AG04449 (cell line): ENCODE measurements at regions of chr3 and their contacts with region 1.

Region 1: DNA sequence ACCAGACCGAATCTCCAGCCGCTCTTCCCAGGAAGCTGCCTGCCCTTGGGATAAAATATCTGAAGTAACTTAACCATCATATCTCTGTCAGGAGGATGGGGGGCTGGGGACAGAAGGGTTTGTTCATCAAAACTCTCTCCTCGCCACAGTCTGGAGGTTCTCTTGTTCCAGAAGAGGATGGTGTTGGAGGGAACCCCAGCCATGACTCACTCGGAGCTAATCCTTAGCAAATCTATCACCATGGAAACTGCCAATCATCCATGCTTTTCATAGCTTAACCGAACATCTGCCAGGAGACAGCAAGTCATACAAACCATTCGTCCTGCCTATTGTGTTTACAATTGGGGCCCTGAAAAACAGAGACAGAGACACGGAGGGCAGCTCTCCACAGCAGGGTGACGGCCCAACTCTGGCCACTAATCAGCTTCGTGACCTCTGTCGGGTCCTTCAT is 73.7 kb upstream of the HEG1 start:
- DNase-seq: peak; percentile 96
- H3K4me3 ChIP-seq: no peak overlapping the region
- CTCF ChIP-seq: no peak

Region 2: GRCh38 chr3:124905849-124906248 is 223.7 kb before region 1 on chr3:
- CTCF ChIA-PET with region 1: no interaction called
- POLR2A ChIA-PET with region 1: no interaction called
- DNase-seq: no peak
- H3K4me3 ChIP-seq: no peak overlapping the region
- CTCF ChIP-seq: no peak

Region 3: DNA sequence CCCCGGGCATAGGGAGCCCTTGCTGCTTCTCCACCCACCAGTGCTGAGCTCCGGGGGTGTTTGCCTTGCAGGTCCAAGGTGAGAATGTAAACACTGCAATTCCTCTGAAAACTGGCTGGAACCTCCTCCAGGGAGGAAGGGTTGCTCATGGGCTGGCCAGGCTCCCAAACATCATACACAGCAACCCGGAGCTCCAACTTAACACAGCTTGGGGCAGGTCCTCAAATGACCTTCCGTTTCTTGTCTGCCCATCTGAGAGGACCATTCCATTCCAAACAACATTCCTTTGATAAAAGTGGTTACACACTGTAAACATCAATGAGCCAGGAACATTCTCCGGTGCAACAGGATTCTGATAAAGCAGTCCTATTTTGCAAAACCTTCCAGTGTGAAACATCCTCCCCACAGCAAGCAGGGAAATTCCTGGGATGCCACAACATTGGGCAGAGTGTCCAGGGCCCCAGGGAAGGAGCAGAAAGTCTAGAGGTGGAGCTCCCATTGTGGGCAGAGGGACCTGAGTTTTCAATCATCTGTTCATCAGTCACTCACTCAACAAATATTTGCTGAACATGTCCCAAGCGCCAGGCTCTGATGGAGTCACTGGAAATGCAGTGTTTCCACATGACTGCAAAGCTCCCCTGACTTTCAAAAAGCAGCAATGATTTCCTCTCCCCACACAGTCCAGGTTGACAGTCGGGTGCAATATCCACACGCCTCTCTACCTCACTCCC is 66.5 kb before region 1 on chr3:
- CTCF ChIA-PET with region 1: interaction called, 3 read pairs
- POLR2A ChIA-PET with region 1: interaction called, 14 read pairs
- DNase-seq: peak; percentile 95
- H3K4me3 ChIP-seq: no peak overlapping the region
- CTCF ChIP-seq: no peak

Region 4: DNA sequence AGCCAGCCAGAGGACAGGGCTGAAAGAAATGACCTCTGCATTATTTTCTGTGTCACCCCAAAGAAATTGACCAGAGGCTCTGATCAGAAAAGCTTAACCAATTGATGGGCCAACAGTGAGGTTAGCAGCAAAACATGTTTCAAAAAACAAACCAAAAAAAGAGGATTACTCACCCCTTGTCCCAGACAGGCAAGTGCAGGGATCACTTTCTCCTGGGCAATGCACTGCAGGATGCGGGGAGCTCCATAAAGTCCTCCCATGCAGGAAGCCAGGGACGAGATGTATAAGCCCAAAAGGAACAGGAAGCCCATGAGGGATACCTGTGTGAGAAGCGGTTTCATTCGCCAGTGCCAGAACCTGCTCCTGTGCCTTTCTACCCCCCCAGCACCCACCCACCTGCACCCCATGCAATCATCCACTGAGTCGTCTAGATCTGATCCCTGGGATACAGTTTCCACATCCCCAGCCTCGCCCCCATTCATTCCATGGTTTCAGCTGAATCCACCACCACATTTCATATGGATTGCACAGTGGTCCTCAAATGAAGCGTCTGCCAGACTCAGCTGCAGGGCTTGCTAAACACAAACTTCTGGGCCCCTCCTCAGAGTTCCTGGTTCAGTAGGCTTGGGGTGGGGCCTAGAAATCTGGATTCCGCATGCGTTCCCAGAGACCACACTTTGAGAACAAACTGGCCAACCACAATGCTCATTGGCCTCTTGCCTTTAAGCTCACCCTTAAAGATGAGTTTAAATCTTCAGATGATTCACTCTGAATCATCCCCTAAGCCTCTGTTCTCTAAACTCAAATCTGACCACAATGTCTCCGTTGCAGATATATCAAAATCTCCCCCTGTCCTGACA is 19.3 kb before region 1 on chr3:
- CTCF ChIA-PET with region 1: interaction called, 3 read pairs
- POLR2A ChIA-PET with region 1: interaction called, 11 read pairs
- DNase-seq: peak; percentile 90
- H3K4me3 ChIP-seq: peak overlapping the region; percentile 45
- CTCF ChIP-seq: no peak

Region 5: DNA sequence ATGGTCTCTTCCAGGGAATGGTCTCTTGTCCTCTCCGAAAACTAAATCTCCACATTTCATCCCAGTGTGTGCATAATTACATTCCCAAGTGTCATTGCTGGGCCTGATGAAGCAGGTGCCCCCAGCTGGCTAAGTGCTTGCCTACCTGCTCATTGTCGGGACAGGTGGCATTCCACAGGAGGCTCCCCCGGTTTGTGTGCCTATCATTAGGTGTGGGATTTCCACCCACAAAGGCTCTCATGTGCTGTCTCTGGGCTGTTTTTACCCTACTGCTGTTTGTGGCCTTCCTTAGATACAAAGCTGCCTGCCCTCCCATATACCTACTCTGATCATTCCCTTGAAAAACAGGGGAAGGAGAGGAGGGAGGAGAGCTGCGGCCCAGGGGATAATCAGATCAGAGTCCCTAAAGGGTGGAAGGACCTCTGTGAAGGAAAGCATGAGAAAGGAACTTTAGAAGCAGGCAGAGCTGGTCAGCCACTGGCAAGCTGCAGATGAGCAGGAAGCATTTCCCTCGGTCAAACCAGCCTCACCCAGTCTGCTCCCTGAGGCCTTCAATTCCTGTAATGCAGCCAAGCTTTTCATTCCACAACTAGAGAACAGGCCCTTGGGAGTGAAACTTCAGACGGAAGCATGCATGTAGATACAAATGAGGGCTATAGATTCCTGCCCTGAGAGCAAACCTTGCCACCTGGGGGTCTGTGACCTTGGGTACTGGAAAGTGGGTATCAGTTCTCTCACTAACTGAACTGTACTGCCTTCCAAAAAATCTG is 13.0 kb before region 1 on chr3:
- CTCF ChIA-PET with region 1: interaction called, 3 read pairs
- POLR2A ChIA-PET with region 1: interaction called, 11 read pairs
- DNase-seq: peak; percentile 65
- H3K4me3 ChIP-seq: no peak overlapping the region
- CTCF ChIP-seq: no peak